ENCODE measurements at regions of chr6 and their contacts with region 1.

Region 1: GRCh38 chr6:139173172-139173571 is 38.3 kb downstream of the HECA start:
- DNase-seq: peak; percentile 61
- H3K4me3 Mint-ChIP-seq: peak overlapping the region; percentile 32
- H3K27ac Mint-ChIP-seq: peak overlapping the region; percentile 79
- H3K4me1 Mint-ChIP-seq: peaks cover 78% of the 10 kb centered on the region
- H3K27me3 Mint-ChIP-seq: no peaks in the 10 kb centered on the region

Region 2: GRCh38 chr6:139134817-139135581 is 38.2 kb before region 1 on chr6 and contains the start of gene HECA:
- intact Hi-C with region 1: loop called (anchors 2 kb)
- DNase-seq: peak; percentile 100
- H3K4me3 Mint-ChIP-seq: peak within 1 kb of the TSS; percentile 98
- H3K27ac Mint-ChIP-seq: peak within 1 kb of the TSS; percentile 97
- H3K4me1 Mint-ChIP-seq: peaks cover 60% of the 10 kb centered on the region
- H3K27me3 Mint-ChIP-seq: no peaks in the 10 kb centered on the region
- total RNA-seq, gene HECA: 45.7 and 47.7 TPM in 2 replicates

Region 3: DNA sequence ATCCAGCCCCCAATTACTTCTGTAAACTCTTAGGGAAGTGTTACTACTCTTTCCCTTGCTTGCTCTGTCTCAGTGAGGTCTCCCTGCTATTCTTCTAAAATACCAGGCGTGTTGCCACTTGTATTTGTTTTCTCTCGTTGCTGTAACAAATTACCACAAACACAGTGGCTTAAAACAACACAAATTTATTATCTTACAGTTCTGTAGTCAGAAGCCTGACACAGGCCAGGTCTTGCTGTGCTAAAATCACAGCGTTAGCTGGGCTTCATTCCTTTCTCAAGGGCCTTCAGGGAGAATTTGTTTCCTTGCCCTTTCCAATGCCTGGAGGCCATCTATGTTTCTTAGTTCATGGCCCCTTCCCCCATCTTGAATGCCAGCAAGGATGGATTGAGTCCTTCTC is 21.6 kb after region 1 on chr6:
- intact Hi-C with region 1: no loop called
- DNase-seq: no peak
- H3K4me3 Mint-ChIP-seq: no peak overlapping the region
- H3K27ac Mint-ChIP-seq: no peak overlapping the region
- H3K4me1 Mint-ChIP-seq: peaks cover 2% of the 10 kb centered on the region
- H3K27me3 Mint-ChIP-seq: no peaks in the 10 kb centered on the region

Measured in activated CD4-positive, alpha-beta T cell treated with anti-CD3 and anti-CD28 coated beads, Interleukin-2, amount 10 ng/mL, durations not matched to agents 24 days and 14 days (primary cell).